Activated CD8-positive, alpha-beta T cell treated with anti-CD3 and anti-CD28 coated beads for 36 hours (primary cell): ENCODE measurements at regions of chr3 and their contacts with region 1.

Region 1: GRCh38 chr3:14467814-14468620 is 65.6 kb downstream of the SLC6A6 start:
- DNase-seq: peak; percentile 43
- ATAC-seq: peak; percentile 74
- H3K4me3 Mint-ChIP-seq: no peak overlapping the region
- H3K27ac Mint-ChIP-seq: no peak overlapping the region
- H3K4me1 Mint-ChIP-seq: no peaks in the 10 kb centered on the region
- H3K27me3 Mint-ChIP-seq: no peaks in the 10 kb centered on the region
- CTCF ChIP-seq: peak; percentile 87

Region 2: GRCh38 chr3:14261229-14261628 is 206.8 kb before region 1 on chr3:
- CTCF ChIA-PET with region 1: interaction called, 34 read pairs
- POLR2A ChIA-PET with region 1: no interaction called
- intact Hi-C with region 1: loop called (anchors 2 kb)
- DNase-seq: peak; percentile 81
- ATAC-seq: peak; percentile 65
- H3K4me3 Mint-ChIP-seq: no peak overlapping the region
- H3K27ac Mint-ChIP-seq: no peak overlapping the region
- H3K4me1 Mint-ChIP-seq: no peaks in the 10 kb centered on the region
- H3K27me3 Mint-ChIP-seq: no peaks in the 10 kb centered on the region
- CTCF ChIP-seq: peak; percentile 97

Region 3: GRCh38 chr3:14268897-14269296 is 199.1 kb before region 1 on chr3:
- CTCF ChIA-PET with region 1: interaction called, 12 read pairs
- POLR2A ChIA-PET with region 1: no interaction called
- intact Hi-C with region 1: no loop called
- DNase-seq: no peak
- ATAC-seq: no peak
- H3K4me3 Mint-ChIP-seq: no peak overlapping the region
- H3K27ac Mint-ChIP-seq: no peak overlapping the region
- H3K4me1 Mint-ChIP-seq: no peaks in the 10 kb centered on the region
- H3K27me3 Mint-ChIP-seq: no peaks in the 10 kb centered on the region
- CTCF ChIP-seq: no peak

Region 4: GRCh38 chr3:14274999-14275961 is 192.7 kb before region 1 on chr3:
- CTCF ChIA-PET with region 1: interaction called, 13 read pairs
- POLR2A ChIA-PET with region 1: no interaction called
- intact Hi-C with region 1: no loop called
- DNase-seq: peak; percentile 10
- ATAC-seq: peak; percentile 45
- H3K4me3 Mint-ChIP-seq: no peak overlapping the region
- H3K27ac Mint-ChIP-seq: no peak overlapping the region
- H3K4me1 Mint-ChIP-seq: no peaks in the 10 kb centered on the region
- H3K27me3 Mint-ChIP-seq: no peaks in the 10 kb centered on the region
- CTCF ChIP-seq: no peak

Region 5: DNA sequence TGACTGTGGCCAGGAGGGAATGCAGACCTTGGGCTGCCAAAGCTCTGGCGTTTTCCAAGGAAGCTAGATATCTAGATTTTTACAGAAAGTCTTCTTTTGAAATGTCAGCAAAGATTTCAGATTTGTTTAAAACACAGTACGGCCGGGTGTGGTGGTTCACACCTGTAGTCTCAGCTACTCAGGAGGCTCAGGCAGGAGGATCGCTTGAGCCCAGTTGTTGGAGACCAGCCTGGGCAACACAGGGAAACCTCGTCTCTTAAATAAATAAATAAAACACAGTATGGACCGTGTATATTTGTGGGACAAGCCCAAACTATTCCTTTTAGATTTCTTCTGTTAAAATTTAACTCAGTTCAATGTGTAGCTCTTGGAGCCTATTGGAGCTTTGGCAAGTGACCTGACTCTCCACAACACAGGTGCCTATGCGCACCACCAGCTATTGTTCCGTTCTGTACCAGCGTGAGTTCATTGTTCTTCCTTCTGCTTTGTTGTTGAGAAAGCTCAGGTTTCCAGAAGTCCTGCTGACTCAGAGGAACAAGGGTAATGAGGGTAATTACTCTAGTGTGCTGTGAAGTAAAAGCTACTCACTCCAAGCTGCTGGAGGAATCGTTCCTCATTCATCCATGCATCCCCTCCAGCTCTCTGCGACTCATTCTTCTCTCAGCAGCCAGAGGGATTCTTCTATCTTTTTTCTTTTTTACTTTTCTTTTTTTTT is 138.7 kb before region 1 on chr3:
- CTCF ChIA-PET with region 1: interaction called, 11 read pairs
- POLR2A ChIA-PET with region 1: no interaction called
- intact Hi-C with region 1: no loop called
- DNase-seq: no peak
- ATAC-seq: no peak
- H3K4me3 Mint-ChIP-seq: no peak overlapping the region
- H3K27ac Mint-ChIP-seq: no peak overlapping the region
- H3K4me1 Mint-ChIP-seq: no peaks in the 10 kb centered on the region
- H3K27me3 Mint-ChIP-seq: peaks cover 3% of the 10 kb centered on the region
- CTCF ChIP-seq: no peak

Region 6: GRCh38 chr3:14402304-14402811 is 65.7 kb before region 1 on chr3 and contains the start of gene SLC6A6:
- CTCF ChIA-PET with region 1: interaction called, 12 read pairs
- POLR2A ChIA-PET with region 1: interaction called, 5 read pairs
- intact Hi-C with region 1: loop called (anchors 10 kb)
- DNase-seq: peak; percentile 97
- ATAC-seq: peak; percentile 82
- H3K4me3 Mint-ChIP-seq: peak within 1 kb of the TSS; percentile 92
- H3K27ac Mint-ChIP-seq: peak within 1 kb of the TSS; percentile 95
- H3K4me1 Mint-ChIP-seq: peaks cover 36% of the 10 kb centered on the region
- H3K27me3 Mint-ChIP-seq: no peaks in the 10 kb centered on the region
- CTCF ChIP-seq: no peak
- total RNA-seq, gene SLC6A6: 43.4 to 48.8 TPM

Region 7: DNA sequence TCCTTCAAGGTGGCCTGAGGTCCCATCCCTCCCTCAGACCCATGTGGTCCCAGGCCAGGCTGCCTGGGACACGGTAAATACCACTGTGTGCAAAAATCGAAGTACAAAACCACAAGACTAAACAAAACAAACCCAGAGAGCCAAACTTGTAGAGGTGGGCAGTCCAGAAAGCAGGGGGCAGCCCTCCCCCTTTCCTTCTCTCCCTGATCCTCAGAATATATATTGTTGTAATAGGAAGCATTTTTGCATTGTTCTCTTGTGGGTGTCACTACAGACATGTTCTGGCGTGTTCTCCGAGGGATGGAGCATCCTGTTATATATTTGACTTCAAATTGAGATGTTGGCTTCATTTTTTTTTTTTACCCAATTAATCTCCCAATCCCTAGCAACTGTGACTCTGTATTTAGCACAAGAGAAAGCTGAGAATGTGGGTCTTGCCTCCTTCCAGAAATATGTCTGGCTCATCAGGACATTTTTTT is 20.6 kb after region 1 on chr3:
- CTCF ChIA-PET with region 1: no interaction called
- POLR2A ChIA-PET with region 1: no interaction called
- intact Hi-C with region 1: no loop called
- DNase-seq: no peak
- ATAC-seq: no peak
- H3K4me3 Mint-ChIP-seq: no peak overlapping the region
- H3K27ac Mint-ChIP-seq: peak overlapping the region; percentile 69
- H3K4me1 Mint-ChIP-seq: no peaks in the 10 kb centered on the region
- H3K27me3 Mint-ChIP-seq: no peaks in the 10 kb centered on the region
- CTCF ChIP-seq: no peak